ENCODE measurements at regions of chr2 and their contacts with region 1.

Region 1: GRCh38 chr2:233404222-233404621 is 49.9 kb downstream of the DGKD start:
- DNase-seq: peak; percentile 36 to 51 (median 44)
- ATAC-seq: peak; percentile 89
- H3K4me3 ChIP-seq: no peak overlapping the region
- H3K27ac ChIP-seq: no peak overlapping the region
- H3K4me1 ChIP-seq: no peaks in the 10 kb centered on the region; a peak in 2 of 5 replicates
- H3K27me3 ChIP-seq: no peaks in the 10 kb centered on the region
- CTCF ChIP-seq: peak; percentile 71 to 74 (median 72)
- EP300 ChIP-seq: no peak
- POLR2A ChIP-seq: no peak
- RAD21 ChIP-seq: peak; percentile 65 to 75

Region 2: DNA sequence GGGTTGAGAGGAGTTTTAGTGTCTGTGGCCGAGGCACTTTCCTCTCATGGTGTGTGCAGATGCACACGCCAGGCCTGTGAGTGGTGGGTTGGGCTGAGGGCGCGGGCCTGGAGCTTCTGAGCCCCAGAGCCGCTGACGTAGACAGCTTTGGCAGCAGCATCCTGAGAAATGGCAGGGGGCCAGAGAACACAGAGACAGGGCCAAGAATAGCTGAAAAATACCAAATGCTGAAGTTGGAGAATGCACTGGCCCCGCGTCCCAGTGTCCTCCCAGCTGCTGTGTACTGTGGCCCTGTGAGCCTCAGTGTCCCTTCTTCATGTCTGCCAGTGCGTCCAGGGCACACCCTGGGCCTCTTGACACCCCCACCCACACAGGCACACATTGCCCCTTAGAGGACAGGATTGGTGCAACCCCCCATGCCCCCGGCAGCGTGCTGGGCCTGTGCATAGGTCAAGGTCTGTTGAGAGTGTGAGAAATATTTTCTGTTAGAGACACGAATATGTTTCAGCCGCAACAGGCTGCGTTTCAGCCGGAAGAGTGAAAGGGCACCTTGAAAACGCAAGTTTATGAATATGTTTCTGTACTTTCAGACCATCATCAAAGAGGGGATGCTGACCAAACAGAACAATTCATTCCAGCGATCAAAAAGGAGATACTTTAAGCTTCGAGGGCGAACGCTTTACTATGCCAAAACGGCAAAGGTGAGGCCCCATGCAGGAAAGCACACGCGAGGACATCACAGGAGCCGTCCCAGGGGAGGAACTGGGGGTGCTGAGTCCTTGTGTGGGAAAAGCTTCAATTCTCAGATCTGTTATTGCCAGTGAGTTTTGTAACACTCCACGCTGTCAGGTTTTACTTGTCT is 16.3 kb before region 1 on chr2:
- CTCF ChIA-PET with region 1: no interaction called
- POLR2A ChIA-PET with region 1: no interaction called
- in situ Hi-C with region 1: no loop called
- intact Hi-C with region 1: no loop called
- DNase-seq: no peak
- ATAC-seq: no peak
- H3K4me3 ChIP-seq: no peak overlapping the region
- H3K27ac ChIP-seq: no peak overlapping the region
- H3K4me1 ChIP-seq: peaks cover 0 to 10% of the 10 kb centered on the region in 2 experiments; a peak in 4 of 5 replicates
- H3K27me3 ChIP-seq: no peaks in the 10 kb centered on the region
- CTCF ChIP-seq: no peak
- EP300 ChIP-seq: no peak
- POLR2A ChIP-seq: no peak
- RAD21 ChIP-seq: no peak

Region 3: DNA sequence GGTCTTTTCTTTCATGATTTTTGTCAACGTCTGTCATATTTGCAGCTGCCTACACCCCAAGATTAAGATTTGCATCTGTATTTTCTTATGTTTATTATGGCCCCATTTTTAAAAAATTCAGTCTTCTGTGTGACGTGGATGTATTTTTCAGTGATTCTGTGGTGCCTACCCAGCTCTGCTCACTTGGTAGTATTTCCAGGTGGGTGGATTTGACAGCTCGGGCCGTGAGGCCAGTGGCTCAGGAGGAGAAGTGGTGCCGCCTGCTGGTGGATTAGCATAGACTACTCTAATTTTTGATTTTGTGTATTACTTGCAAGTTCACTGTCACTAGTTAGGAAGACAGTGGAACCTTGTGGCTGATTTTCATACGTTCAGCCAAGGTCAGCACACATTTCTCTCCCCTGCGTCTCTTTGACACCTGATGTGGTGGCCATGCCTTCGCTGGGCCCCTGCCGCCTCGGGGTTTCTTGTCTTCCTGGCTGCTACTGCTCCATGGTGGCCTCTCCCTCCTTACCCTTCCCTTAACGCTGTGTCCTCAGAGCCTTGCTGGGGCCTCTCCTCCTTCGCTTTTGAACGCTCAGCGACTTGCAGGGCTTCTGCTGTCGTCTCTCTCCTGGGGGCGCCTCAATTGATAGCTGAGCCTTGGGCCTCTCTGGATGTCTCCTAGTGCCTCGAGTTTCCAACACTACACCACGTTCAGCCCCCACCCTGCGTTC is 39.4 kb after region 1 on chr2:
- CTCF ChIA-PET with region 1: interaction called, 36 read pairs
- POLR2A ChIA-PET with region 1: no interaction called
- in situ Hi-C with region 1: no loop called
- intact Hi-C with region 1: loop called (anchors 1 kb)
- DNase-seq: peak; percentile 74 to 76 (median 75)
- ATAC-seq: peak; percentile 92
- H3K4me3 ChIP-seq: no peak overlapping the region
- H3K27ac ChIP-seq: no peak overlapping the region
- H3K4me1 ChIP-seq: no peaks in the 10 kb centered on the region; a peak in 2 of 5 replicates
- H3K27me3 ChIP-seq: no peaks in the 10 kb centered on the region
- CTCF ChIP-seq: peak; percentile 80 to 88 (median 81)
- EP300 ChIP-seq: no peak
- POLR2A ChIP-seq: no peak
- RAD21 ChIP-seq: peak; percentile 76 to 88

Region 4: GRCh38 chr2:233470011-233470687 is 65.9 kb after region 1 on chr2:
- CTCF ChIA-PET with region 1: no interaction called
- POLR2A ChIA-PET with region 1: no interaction called
- in situ Hi-C with region 1: no loop called
- intact Hi-C with region 1: no loop called
- DNase-seq: peak; percentile 27 to 43 (median 32)
- ATAC-seq: peak; percentile 77
- H3K4me3 ChIP-seq: no peak overlapping the region
- H3K27ac ChIP-seq: no peak overlapping the region; the same call in 2 of the 3 replicates
- H3K4me1 ChIP-seq: peaks cover 4 to 39% of the 10 kb centered on the region in 2 experiments; a peak in 3 of 5 replicates
- H3K27me3 ChIP-seq: no peaks in the 10 kb centered on the region
- CTCF ChIP-seq: no peak
- EP300 ChIP-seq: no peak
- POLR2A ChIP-seq: no peak
- RAD21 ChIP-seq: no peak

Region 5: GRCh38 chr2:234135720-234136221 is 731.5 kb after region 1 on chr2:
- CTCF ChIA-PET with region 1: no interaction called
- POLR2A ChIA-PET with region 1: no interaction called
- in situ Hi-C with region 1: no loop called
- intact Hi-C with region 1: no loop called
- DNase-seq: peak; percentile 36 to 53 (median 42)
- ATAC-seq: peak; percentile 82
- H3K4me3 ChIP-seq: no peak overlapping the region
- H3K27ac ChIP-seq: no peak overlapping the region
- H3K4me1 ChIP-seq: no peaks in the 10 kb centered on the region; a peak in 1 of 5 replicates
- H3K27me3 ChIP-seq: peaks cover 0 to 9% of the 10 kb centered on the region in 2 experiments; a peak in 1 of 5 replicates
- CTCF ChIP-seq: peak; percentile 45 to 57 (median 54)
- EP300 ChIP-seq: no peak
- POLR2A ChIP-seq: no peak
- RAD21 ChIP-seq: peak; percentile 48 to 59